Activated CD8-positive, alpha-beta memory T cell treated with anti-CD3 and anti-CD28 coated beads, Interleukin-2, amount 10 ng/mL, durations not matched to agents 7 days and 5 days (primary cell): ENCODE measurements at regions of chr10 and their contacts with region 1.

Region 1: DNA sequence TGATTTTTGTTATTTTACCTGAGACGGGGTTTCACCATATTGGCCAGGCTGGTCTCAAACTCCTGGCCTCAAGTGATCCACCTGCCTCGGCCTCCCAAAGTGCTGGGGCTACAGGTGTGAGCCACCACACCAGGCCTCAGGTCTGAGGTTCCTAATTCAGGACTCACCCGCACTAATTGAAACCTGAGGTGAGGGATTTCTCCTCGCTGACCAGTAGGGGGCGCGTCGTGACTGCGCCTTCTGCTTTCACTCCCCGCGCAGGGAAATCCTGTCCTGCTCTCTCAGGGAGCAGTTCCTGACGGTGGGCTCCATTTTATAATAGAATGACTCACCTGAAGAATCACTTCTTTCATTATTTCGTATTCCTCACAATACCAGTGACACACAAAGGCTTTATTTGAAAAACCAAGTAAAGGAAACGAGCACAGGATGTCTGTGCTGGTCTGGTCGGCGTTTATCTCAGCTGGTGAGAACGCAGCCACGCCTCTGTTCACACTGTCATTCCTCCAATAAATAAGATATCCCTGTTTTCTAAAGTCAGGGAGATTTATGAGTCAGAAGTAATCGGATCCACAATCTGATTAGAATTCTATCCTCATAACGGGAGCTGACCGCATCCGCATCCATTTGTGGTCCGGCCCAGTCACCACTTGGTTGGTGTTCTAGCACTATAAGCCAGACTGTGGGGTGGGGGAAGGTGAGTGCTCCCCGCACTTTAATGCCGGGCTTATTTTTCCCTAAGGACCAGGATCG is 35.4 kb downstream of the BAG3 start:
- DNase-seq: peak; percentile 85
- ATAC-seq: peak; percentile 93
- H3K4me3 Mint-ChIP-seq: peak overlapping the region; percentile 58
- H3K27ac Mint-ChIP-seq: peak overlapping the region; percentile 66
- H3K4me1 Mint-ChIP-seq: peaks cover 27% of the 10 kb centered on the region
- H3K27me3 Mint-ChIP-seq: peaks cover 6% of the 10 kb centered on the region

Region 2: DNA sequence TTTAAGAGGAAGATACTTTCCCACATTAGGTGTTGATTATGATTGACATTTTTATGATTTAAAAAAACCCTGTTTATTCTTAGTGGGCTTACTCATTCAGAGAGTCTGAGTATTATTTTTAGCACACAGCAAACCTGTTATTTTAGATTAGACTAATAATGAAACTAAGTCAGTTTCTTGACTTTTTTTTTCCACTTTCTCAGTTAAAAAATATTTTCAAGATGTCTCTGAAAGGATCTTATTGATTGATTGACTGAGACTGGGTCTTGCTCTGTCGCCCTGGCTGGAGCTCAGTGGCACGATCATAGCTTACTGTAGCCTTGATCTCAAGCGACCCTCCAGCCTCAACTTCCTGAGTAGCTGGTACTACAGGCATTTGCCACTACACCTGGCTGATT is 18.8 kb after region 1 on chr10:
- CTCF ChIA-PET with region 1: interaction called, 68 read pairs
- DNase-seq: no peak
- ATAC-seq: peak; percentile 63
- H3K4me3 Mint-ChIP-seq: peak overlapping the region; percentile 62
- H3K27ac Mint-ChIP-seq: peak overlapping the region; percentile 95
- H3K4me1 Mint-ChIP-seq: peaks cover 66% of the 10 kb centered on the region
- H3K27me3 Mint-ChIP-seq: no peaks in the 10 kb centered on the region

Region 3: GRCh38 chr10:119725828-119726675 is 39.4 kb after region 1 on chr10 and contains the start of gene INPP5F:
- CTCF ChIA-PET with region 1: interaction called, 41 read pairs
- DNase-seq: peak; percentile 99
- ATAC-seq: peak; percentile 93
- H3K4me3 Mint-ChIP-seq: peak within 1 kb of the TSS; percentile 83
- H3K27ac Mint-ChIP-seq: peak within 1 kb of the TSS; percentile 66
- H3K4me1 Mint-ChIP-seq: peaks cover 40% of the 10 kb centered on the region
- H3K27me3 Mint-ChIP-seq: no peaks in the 10 kb centered on the region
- total RNA-seq, gene INPP5F: 17.4 to 32.0 TPM

Region 4: DNA sequence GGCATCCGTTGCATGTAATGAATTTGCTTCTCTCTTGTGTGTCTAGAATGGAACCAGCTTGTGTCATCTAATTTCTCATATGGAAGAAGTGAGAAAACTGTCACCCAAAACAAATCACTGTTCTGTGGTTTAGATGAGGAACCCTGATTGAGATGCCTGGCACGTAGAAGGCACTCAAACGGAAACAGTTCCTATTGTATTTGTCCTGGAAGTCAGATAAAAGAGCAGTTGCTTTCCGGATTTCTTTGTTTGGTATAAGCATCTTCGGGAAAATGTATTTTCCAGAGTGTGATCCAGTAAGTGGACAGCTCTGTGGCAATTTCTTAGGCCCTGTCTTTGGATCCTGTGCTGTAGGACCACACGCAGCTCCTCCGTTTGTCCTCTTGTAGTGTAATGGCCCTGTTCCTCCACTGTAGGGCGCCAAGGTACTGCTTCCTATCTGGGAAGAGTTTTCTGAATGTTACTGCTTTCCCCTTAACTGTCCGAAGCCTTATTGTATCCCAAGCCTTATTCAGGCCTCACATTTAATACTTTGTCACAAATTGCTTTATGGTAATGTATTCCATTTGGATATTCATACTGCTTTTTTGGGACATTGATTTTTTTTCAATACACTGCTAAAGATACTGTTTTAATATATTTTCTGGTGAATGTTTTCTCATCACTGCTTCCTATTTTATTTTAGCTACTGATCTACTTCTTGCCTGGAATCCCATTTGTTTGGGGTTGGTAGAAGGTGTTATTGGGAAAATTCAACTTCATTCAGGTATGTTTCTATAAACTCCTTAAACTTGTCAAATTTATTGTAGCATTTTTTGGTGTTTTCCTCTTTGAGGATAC is 64.0 kb after region 1 on chr10:
- CTCF ChIA-PET with region 1: interaction called, 50 read pairs
- DNase-seq: peak; percentile 73
- ATAC-seq: peak; percentile 93
- H3K4me3 Mint-ChIP-seq: no peak overlapping the region
- H3K27ac Mint-ChIP-seq: no peak overlapping the region
- H3K4me1 Mint-ChIP-seq: peaks cover 4% of the 10 kb centered on the region
- H3K27me3 Mint-ChIP-seq: no peaks in the 10 kb centered on the region

Region 5: DNA sequence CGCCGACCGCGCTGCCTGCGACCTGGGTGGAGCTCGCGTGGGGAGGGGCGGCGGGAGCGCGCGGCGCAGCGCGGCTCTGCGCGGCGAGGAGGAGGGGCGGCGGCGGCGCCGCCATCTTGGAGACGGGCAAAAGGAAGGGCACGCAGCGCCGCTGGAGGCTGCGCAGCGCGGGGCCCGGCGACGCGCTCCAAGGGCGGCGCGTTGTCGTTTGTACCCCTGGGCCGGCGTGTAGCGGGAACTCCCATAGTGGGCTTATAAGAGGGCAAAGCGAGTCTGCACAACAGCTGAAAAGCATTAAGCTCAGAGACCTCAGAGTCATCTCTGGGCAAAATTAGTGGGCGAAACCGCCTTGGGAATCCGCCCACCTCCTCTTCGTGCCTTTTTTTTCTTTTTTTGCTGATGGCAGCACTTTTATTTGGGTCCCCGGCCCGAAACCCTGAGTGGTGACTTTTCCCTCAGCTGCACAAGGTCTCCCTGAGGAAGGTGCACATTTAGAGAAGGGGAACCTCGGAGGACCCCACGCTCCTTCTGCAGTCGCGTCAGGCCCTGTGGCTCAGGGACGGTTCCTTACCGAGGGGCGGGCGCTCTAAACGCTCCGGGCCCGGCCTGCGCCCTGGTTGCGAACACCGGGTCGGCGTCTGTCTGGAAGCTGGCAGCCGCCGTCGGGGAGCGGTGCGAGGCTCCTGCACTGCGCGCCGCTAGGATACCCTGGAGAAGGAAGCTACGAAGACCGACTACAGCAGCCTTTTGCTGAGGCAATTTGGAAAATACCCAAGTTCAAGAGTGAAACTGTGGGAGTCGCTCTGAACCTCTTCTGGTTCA is 186.5 kb after region 1 on chr10:
- CTCF ChIA-PET with region 1: interaction called, 13 read pairs
- DNase-seq: peak; percentile 91
- ATAC-seq: peak; percentile 94
- H3K4me3 Mint-ChIP-seq: peak overlapping the region; percentile 79
- H3K27ac Mint-ChIP-seq: peak overlapping the region; percentile 87
- H3K4me1 Mint-ChIP-seq: peaks cover 36% of the 10 kb centered on the region
- H3K27me3 Mint-ChIP-seq: peaks cover 4% of the 10 kb centered on the region